ENCODE measurements at regions of chr1 and their contacts with region 1.

Region 1: DNA sequence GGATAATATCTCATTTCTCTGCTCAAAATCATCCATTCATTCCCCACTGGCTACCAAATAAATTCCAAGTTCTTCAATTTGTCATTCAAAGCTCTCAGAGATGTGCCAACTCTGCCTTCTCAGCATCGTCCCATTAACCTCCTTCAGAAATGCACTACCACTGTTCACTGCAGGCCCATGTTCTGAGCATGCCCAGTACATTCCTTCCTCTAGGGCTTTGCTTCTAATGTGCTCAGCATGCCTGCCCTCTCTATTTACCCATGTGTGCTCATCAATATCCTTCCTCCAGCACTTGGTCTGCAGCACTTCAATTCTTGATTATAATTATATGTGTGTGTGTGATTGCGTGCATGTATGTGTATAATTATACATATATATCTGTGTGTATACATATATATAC is 36.1 kb upstream of the RGS8 start:
- DNase-seq: peak; percentile 19
- ATAC-seq: peak; percentile 92
- H3K4me3 ChIP-seq: no peak overlapping the region
- H3K27ac ChIP-seq: no peak overlapping the region
- H3K4me1 ChIP-seq: no peaks in the 10 kb centered on the region
- H3K27me3 ChIP-seq: no peaks in the 10 kb centered on the region
- CTCF ChIP-seq: peak in 2 of 3 experiments; percentile 47 to 59; a peak in 4 of 6 replicates
- POLR2A ChIP-seq: no peak
- RAD21 ChIP-seq: no peak

Region 2: DNA sequence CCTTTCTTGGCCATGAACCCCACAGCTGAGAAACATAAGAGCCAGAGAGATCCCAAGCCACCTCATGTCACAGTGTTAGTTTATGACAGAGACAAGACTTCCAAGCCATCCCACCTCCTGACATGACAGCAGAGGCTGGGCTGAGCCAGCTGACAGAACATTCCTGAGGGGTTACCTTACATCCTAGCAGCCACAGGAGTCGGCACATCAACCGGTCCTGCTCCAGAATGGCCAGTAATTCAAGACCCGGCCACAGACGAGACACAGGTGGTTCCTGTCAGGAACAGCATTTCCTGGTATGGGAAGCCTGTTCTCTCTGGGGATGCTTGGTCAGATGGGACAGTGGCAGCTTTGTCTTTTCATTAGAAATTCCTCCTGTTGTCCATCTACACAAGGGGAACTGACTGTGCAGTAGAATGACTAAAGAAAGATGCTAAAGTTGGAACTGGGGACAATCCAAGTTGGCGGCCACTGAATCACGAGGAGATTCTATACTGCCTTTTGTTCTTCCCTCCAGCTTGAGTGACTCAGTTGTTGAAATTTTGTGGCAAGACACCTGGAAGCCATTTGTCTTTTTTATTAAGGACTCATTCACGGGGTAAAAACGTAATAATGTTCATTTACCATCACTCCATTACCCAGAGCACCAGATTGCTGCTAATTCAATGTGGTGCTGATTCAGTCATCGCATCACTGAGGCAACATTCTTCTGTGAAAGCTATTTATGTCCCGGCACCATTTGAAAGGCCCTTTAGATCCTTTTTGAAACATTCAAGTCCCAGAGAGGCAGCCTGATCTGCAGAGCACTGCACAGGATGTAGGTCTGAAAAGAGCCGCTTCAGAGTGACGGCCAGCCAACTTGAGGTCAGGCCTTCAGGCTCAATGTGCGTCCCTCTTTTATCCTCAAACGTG is 31.9 kb after region 1 on chr1:
- CTCF ChIA-PET with region 1: no interaction called
- POLR2A ChIA-PET with region 1: no interaction called
- RAD21 ChIA-PET with region 1: no interaction called
- intact Hi-C with region 1: loop called (anchors 1 kb)
- DNase-seq: no peak
- ATAC-seq: no peak
- H3K4me3 ChIP-seq: no peak overlapping the region
- H3K27ac ChIP-seq: no peak overlapping the region
- H3K4me1 ChIP-seq: no peaks in the 10 kb centered on the region
- H3K27me3 ChIP-seq: no peaks in the 10 kb centered on the region; the same call in 1 of the 2 replicates
- CTCF ChIP-seq: no peak
- POLR2A ChIP-seq: no peak
- RAD21 ChIP-seq: no peak

Region 3: DNA sequence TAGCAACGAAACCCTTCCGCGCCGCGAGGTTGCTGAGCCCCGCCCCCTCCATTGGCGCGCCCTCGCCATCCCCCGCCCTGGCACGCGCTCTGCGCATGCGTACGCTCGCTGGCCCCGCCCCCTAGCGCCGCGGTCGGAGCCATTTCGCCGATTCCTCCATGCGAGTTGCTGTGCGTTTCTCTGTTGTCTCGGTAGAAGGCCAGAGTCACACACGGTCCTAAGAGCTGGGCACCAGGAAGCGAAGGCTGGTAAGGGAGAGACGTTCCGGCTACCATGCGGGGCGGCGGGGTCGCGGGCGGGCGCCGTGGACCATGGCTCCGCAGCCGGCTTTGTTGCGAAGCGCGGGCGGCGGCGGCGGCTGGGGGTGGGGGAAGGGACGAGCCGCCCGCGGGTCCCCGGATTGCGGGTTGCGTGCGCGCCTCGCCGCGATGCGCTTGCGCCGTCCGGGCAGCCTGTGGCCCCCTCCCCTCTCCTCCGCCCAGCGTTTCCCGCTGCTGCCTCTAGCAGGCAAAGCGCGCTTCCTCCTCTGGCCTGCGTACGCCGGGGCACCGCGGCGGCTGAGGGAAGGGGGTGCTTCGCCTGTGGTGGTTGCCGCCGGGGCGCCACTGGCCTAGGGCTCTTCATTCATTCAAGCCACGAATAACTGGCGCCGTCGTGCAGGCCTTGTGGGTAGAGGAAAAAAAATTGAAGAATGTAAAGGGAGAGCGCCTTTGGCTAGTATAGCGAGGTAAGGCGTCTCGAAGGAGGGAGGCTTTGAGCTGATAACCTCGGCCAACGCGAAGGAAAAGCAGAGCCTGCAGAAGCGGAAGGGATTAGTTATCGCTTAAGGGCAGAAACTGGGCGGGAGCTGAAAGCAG is 119.0 kb after region 1 on chr1 and contains the start of gene DHX9:
- CTCF ChIA-PET with region 1: no interaction called
- POLR2A ChIA-PET with region 1: no interaction called
- RAD21 ChIA-PET with region 1: no interaction called
- intact Hi-C with region 1: no loop called
- DNase-seq: peak; percentile 68
- ATAC-seq: peak; percentile 87
- H3K4me3 ChIP-seq: peak within 1 kb of the TSS; percentile 93 to 95
- H3K27ac ChIP-seq: peak within 1 kb of the TSS; percentile 82
- H3K4me1 ChIP-seq: peaks cover 7 to 21% of the 10 kb centered on the region in 2 experiments; a peak in 3 of 4 replicates
- H3K27me3 ChIP-seq: no peaks in the 10 kb centered on the region
- CTCF ChIP-seq: 0 out of 6 replicates have a peak, but pooled peaks of 1 of the 3 experiments have one; percentile 7
- POLR2A ChIP-seq: peak; percentile 89
- RAD21 ChIP-seq: no peak
- total RNA-seq, gene DHX9: 220 TPM

Measured in HCT116 (cell line).